Spleen (tissue), 13 donors: ENCODE measurements at regions of chr19 and their contacts with region 1.

Region 1: DNA sequence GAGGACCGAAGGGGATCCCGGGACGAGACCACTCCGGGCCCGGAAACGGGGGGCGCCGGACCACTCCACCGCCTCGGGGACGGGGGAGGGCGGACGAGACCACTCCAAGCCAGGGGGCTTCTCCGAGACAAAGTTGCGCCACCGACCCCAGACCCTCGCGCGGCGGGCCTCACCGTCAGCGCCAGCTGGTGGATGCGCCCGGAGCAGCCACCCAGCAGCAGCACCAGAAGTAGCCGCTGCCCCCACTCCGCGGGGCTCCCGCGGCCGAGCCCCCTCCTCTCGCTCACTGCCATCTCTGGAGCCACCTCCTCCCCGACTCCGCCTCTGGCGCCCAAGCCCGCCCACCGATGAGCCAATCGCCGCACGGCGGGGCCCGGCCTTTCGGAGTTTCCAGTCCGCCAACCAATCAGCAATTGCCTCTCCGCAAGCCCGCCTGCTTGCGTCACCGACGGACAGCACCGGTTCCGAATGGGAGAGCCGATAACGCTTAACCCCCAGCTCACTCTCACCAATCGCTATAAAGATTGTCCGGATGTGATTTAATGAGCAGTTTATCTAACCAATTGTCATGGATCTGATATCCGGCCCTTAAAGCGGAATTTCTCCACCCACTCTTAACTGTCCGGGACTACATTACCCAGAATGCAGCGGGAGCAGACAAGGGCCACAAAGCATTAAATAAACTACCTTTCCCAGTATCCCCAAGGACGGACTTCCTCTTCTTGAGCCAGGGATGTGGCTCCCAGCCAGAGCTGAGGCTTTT is at the start of gene GPR108:
- DNase-seq: peak; percentile 100
- H3K4me3 ChIP-seq: peak within 1 kb of the TSS; percentile 64 to 90 (median 84)
- H3K27ac ChIP-seq: peak within 1 kb of the TSS; percentile 91 to 99 (median 98)
- H3K4me1 ChIP-seq: peaks cover 20 to 80% (median 63%) of the 10 kb centered on the region in 6 donors
- H3K27me3 ChIP-seq: peaks cover 0 to 15% (median 0%) of the 10 kb centered on the region in 7 donors
- CTCF ChIP-seq: peak in 1 of 11 experiments; percentile 34
- POLR2A ChIP-seq: peak in 1 of 3 donors; percentile 7
- total RNA-seq, gene GPR108: 35.4 to 75.0 (median 56.0) TPM

Region 2: GRCh38 chr19:6516659-6517291 is 220.7 kb before region 1 on chr19:
- intact Hi-C with region 1: loop called (anchors 10 kb)
- DNase-seq: peak; percentile 98
- H3K4me3 ChIP-seq: peak overlapping the region; percentile 55 to 86 (median 65)
- H3K27ac ChIP-seq: peak overlapping the region; percentile 73 to 92 (median 87)
- H3K4me1 ChIP-seq: peaks cover 16 to 60% (median 36%) of the 10 kb centered on the region in 6 donors
- H3K27me3 ChIP-seq: no peaks in the 10 kb centered on the region
- CTCF ChIP-seq: peak; percentile 94 to 99 (median 98)
- POLR2A ChIP-seq: no peak

Region 3: GRCh38 chr19:6617368-6617767 is 120.1 kb before region 1 on chr19:
- intact Hi-C with region 1: no loop called
- DNase-seq: no peak
- H3K4me3 ChIP-seq: no peak overlapping the region
- H3K27ac ChIP-seq: no peak overlapping the region
- H3K4me1 ChIP-seq: no peaks in the 10 kb centered on the region
- H3K27me3 ChIP-seq: peaks cover 0 to 55% (median 0%) of the 10 kb centered on the region in 7 donors
- CTCF ChIP-seq: no peak
- POLR2A ChIP-seq: no peak